ENCODE measurements at regions of chr11 and their contacts with region 1.

Region 1: DNA sequence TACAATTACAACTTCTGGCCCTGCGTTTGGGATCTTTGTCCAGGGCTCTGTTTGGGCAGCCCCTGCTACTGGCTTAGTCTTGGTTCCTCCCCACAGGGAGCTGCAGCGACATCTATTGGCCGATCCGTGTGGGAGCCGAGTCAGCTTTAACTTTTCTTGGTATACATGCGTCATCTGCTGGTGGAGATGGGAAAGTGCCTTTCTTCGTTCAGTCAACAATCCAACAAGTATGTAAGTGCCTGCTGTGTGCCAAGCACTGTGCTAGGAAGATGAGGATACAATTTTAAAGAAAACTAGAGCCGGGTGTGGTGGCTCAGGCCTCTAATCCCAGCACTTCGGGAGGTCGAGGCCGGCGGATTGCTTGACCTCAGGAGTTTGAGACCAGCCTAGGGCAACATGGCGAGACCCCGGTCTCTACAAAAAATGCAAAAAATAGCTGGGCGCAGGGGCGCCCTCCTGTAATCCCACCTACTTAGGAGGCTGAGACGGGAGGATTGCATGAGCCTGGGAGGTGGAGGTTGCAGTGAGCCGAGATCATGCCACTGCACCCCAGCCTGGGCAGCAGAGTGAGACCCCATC is 8.2 kb downstream of the TPBGL start:
- DNase-seq: peak; percentile 77 to 91 (median 87)
- ATAC-seq: peak; percentile 100
- H3K4me3 ChIP-seq: no peak overlapping the region
- H3K4me3 Mint-ChIP-seq: no peak overlapping the region
- H3K27ac ChIP-seq: no peak overlapping the region
- H3K27ac Mint-ChIP-seq: no peak overlapping the region
- H3K4me1 ChIP-seq: no peaks in the 10 kb centered on the region
- H3K4me1 Mint-ChIP-seq: no peaks in the 10 kb centered on the region
- H3K27me3 ChIP-seq: no peaks in the 10 kb centered on the region
- H3K27me3 Mint-ChIP-seq: peaks cover 2% of the 10 kb centered on the region
- CTCF ChIP-seq: peak; percentile 100

Region 2: DNA sequence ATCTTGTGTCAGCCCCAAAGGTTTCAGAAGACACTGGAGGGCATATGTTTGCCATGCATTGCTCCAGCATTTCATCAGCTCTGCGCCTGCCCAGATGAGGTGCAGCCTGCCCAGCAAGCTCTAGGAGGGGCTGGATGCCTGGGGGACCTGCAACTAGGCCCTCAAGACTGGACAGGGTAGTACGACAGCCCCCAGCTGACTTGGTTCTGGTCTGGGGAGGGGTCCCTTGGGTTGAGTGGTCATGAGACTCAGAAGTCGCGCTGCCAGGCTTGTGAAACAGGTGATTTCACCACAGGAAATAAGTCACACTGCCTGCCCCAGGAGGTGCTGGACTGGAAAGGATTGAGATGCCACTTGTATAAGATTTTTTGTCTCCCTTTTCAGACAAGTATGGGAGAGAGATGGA is 15.2 kb after region 1 on chr11:
- CTCF ChIA-PET with region 1: interaction called, 191 read pairs
- POLR2A ChIA-PET with region 1: interaction called, 3 read pairs
- intact Hi-C with region 1: no loop called
- DNase-seq: peak in 4 of 9 experiments; percentile 33 to 55 (median 42)
- ATAC-seq: no peak
- H3K4me3 ChIP-seq: no peak overlapping the region
- H3K4me3 Mint-ChIP-seq: no peak overlapping the region
- H3K27ac ChIP-seq: peak overlapping the region in 1 of 2 experiments; percentile 64
- H3K27ac Mint-ChIP-seq: peak overlapping the region; percentile 74
- H3K4me1 ChIP-seq: peaks cover 55% of the 10 kb centered on the region
- H3K4me1 Mint-ChIP-seq: peaks cover 49% of the 10 kb centered on the region
- H3K27me3 ChIP-seq: no peaks in the 10 kb centered on the region
- H3K27me3 Mint-ChIP-seq: no peaks in the 10 kb centered on the region
- CTCF ChIP-seq: no peak

Region 3: DNA sequence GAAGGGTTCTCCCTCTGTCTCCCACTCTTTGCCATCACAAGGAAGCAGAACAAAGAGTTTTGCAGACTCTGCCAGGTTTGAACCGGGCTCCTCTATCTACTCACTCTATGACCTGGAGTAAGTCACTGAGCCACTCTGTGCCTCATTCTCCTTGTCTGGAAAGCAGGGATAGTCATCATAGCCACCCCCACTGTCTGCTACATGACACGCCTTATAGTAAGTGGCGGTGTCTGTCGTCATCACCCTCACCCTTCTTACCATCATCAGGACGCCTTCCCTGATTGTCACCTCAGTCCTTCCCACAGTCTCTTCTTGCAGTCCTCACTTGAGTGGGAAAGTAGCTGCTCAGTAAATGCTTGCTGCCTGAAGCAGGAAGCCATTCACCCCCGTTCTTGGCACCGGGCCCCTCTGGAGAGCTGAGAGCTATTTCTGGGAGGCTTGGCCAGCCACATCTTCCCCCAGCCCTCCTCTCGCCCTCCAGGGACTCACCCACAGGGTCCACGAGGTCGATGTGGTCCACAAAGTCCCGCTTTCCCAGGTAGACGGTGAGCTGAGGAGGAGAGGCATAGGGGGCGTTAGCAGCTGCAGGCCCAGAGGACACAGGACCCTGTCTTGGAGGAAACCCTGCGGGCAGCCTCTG is 38.2 kb after region 1 on chr11:
- CTCF ChIA-PET with region 1: no interaction called
- POLR2A ChIA-PET with region 1: no interaction called
- intact Hi-C with region 1: no loop called
- DNase-seq: no peak
- ATAC-seq: no peak
- H3K4me3 ChIP-seq: no peak overlapping the region
- H3K4me3 Mint-ChIP-seq: no peak overlapping the region
- H3K27ac ChIP-seq: no peak overlapping the region
- H3K27ac Mint-ChIP-seq: no peak overlapping the region
- H3K4me1 ChIP-seq: no peaks in the 10 kb centered on the region
- H3K4me1 Mint-ChIP-seq: peaks cover 3% of the 10 kb centered on the region
- H3K27me3 ChIP-seq: no peaks in the 10 kb centered on the region
- H3K27me3 Mint-ChIP-seq: no peaks in the 10 kb centered on the region
- CTCF ChIP-seq: no peak

Measured in CD8-positive, alpha-beta T cell (primary cell).